ENCODE measurements at regions of chr1 and their contacts with region 1.

Region 1: GRCh38 chr1:236603991-236604904 is at the start of gene HEATR1:
- DNase-seq: peak; percentile 62 to 94 (median 82)
- ATAC-seq: peak; percentile 86
- H3K4me3 ChIP-seq: peak within 1 kb of the TSS; percentile 90 to 93
- H3K4me3 Mint-ChIP-seq: peak within 1 kb of the TSS; percentile 96
- H3K27ac ChIP-seq: peak within 1 kb of the TSS; percentile 65 to 77
- H3K27ac Mint-ChIP-seq: peak within 1 kb of the TSS; percentile 98
- H3K4me1 ChIP-seq: peaks cover 23% of the 10 kb centered on the region
- H3K4me1 Mint-ChIP-seq: peaks cover 39% of the 10 kb centered on the region
- H3K27me3 ChIP-seq: peaks cover 0 to 3% of the 10 kb centered on the region in 2 experiments
- H3K27me3 Mint-ChIP-seq: peaks cover 11% of the 10 kb centered on the region
- CTCF ChIP-seq: no peak
- total RNA-seq, gene HEATR1: 52.1 to 53.7 TPM

Region 2: GRCh38 chr1:236281654-236282424 is 322.4 kb before region 1 on chr1 and contains the start of gene ERO1B:
- CTCF ChIA-PET with region 1: no interaction called
- POLR2A ChIA-PET with region 1: interaction called, 3 read pairs
- intact Hi-C with region 1: loop called (anchors 1 to 5 kb)
- DNase-seq: peak; percentile 96 to 99 (median 97)
- ATAC-seq: peak; percentile 93
- H3K4me3 ChIP-seq: peak within 1 kb of the TSS; percentile 75 to 90
- H3K4me3 Mint-ChIP-seq: peak within 1 kb of the TSS; percentile 97
- H3K27ac ChIP-seq: peak within 1 kb of the TSS; percentile 72 to 85
- H3K27ac Mint-ChIP-seq: peak within 1 kb of the TSS; percentile 92
- H3K4me1 ChIP-seq: peaks cover 28% of the 10 kb centered on the region
- H3K4me1 Mint-ChIP-seq: peaks cover 52% of the 10 kb centered on the region
- H3K27me3 ChIP-seq: no peaks in the 10 kb centered on the region
- H3K27me3 Mint-ChIP-seq: no peaks in the 10 kb centered on the region
- CTCF ChIP-seq: no peak
- total RNA-seq, gene ERO1B: 16.2 to 16.6 TPM

Region 3: DNA sequence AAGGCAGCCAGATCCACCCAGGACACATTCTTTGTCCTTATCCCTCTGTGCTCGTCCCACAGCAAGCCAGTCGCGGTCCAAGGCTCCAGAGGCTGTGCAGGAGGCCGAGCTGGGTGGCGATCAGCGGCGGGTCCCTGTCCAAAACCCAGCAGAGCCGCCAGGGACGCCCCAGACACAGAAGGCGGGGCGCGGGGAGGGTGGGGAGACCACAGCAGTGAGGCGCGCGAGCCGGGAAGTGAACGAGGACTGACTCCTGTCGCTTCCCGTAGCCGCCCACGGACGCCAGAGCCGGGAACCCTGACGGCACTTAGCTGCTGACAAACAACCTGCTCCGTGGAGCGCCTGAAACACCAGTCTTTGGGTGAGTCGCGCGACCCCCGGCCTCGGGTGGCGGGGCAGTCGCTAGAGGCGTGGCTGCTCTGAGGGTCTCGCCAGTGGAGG is 80.5 kb before region 1 on chr1 and contains the start of gene LGALS8:
- CTCF ChIA-PET with region 1: no interaction called
- POLR2A ChIA-PET with region 1: no interaction called
- intact Hi-C with region 1: loop called (anchors 1 to 2 kb)
- DNase-seq: peak; percentile 65 to 93 (median 88)
- ATAC-seq: peak; percentile 80
- H3K4me3 ChIP-seq: peak within 1 kb of the TSS; percentile 78 to 95
- H3K4me3 Mint-ChIP-seq: peak within 1 kb of the TSS; percentile 92
- H3K27ac ChIP-seq: peak within 1 kb of the TSS; percentile 84 to 92
- H3K27ac Mint-ChIP-seq: peak within 1 kb of the TSS; percentile 93
- H3K4me1 ChIP-seq: peaks cover 11% of the 10 kb centered on the region
- H3K4me1 Mint-ChIP-seq: peaks cover 32% of the 10 kb centered on the region
- H3K27me3 ChIP-seq: no peaks in the 10 kb centered on the region
- H3K27me3 Mint-ChIP-seq: peaks cover 3% of the 10 kb centered on the region
- CTCF ChIP-seq: no peak
- total RNA-seq, gene LGALS8: 118 to 125 TPM

Region 4: GRCh38 chr1:236590553-236591150 is 13.6 kb before region 1 on chr1:
- CTCF ChIA-PET with region 1: no interaction called
- POLR2A ChIA-PET with region 1: no interaction called
- intact Hi-C with region 1: loop called in 1 of 2 experiments (anchors 1 kb)
- DNase-seq: no peak
- ATAC-seq: no peak
- H3K4me3 ChIP-seq: no peak overlapping the region
- H3K4me3 Mint-ChIP-seq: no peak overlapping the region
- H3K27ac ChIP-seq: no peak overlapping the region
- H3K27ac Mint-ChIP-seq: no peak overlapping the region
- H3K4me1 ChIP-seq: no peaks in the 10 kb centered on the region
- H3K4me1 Mint-ChIP-seq: peaks cover 4% of the 10 kb centered on the region
- H3K27me3 ChIP-seq: no peaks in the 10 kb centered on the region
- H3K27me3 Mint-ChIP-seq: no peaks in the 10 kb centered on the region
- CTCF ChIP-seq: no peak

Region 5: DNA sequence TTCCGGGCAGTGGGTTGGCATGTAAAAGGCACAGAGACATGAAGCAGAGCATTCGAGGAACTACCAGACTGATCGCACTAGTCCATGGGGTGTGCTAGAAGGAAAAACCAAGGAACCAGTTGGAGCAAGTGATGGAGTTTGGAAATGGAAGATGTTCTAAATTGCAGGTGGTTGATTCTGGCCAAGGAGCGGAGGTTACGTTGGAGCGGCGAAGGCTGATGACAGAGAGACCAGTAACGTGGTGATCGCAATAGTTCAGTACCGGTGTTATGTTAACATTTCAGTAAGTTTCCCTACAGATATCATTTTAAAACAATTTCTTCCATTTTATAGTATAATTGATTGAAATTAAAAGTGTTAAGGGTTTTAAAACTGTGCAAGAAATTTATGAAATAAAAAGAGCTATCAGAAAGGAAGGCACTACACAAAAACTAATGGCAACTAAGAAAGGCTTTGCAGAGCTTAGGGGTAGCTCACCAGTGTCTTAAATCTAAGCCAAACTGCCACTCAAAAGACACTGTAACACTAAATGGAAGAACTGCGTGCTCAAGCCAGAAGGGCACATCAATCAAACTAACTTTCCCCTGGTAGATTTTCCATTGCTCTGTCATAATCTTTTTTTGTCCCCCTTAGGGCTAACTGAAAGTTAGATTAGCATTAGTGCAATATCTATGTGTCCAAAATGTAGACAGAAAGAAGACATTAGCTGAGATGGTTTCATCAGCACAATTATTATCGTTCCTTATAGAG is 11.3 kb after region 1 on chr1:
- CTCF ChIA-PET with region 1: no interaction called
- POLR2A ChIA-PET with region 1: no interaction called
- intact Hi-C with region 1: no loop called
- DNase-seq: no peak
- ATAC-seq: no peak
- H3K4me3 ChIP-seq: no peak overlapping the region
- H3K4me3 Mint-ChIP-seq: no peak overlapping the region
- H3K27ac ChIP-seq: no peak overlapping the region
- H3K27ac Mint-ChIP-seq: no peak overlapping the region
- H3K4me1 ChIP-seq: no peaks in the 10 kb centered on the region
- H3K4me1 Mint-ChIP-seq: no peaks in the 10 kb centered on the region
- H3K27me3 ChIP-seq: peaks cover 3 to 4% of the 10 kb centered on the region in 2 experiments
- H3K27me3 Mint-ChIP-seq: peaks cover 41% of the 10 kb centered on the region
- CTCF ChIP-seq: no peak

Region 6: GRCh38 chr1:236786453-236786852 is 182.2 kb after region 1 on chr1:
- CTCF ChIA-PET with region 1: no interaction called
- POLR2A ChIA-PET with region 1: no interaction called
- intact Hi-C with region 1: no loop called
- DNase-seq: no peak
- ATAC-seq: no peak
- H3K4me3 ChIP-seq: no peak overlapping the region
- H3K4me3 Mint-ChIP-seq: no peak overlapping the region
- H3K27ac ChIP-seq: no peak overlapping the region
- H3K27ac Mint-ChIP-seq: no peak overlapping the region
- H3K4me1 ChIP-seq: no peaks in the 10 kb centered on the region
- H3K4me1 Mint-ChIP-seq: no peaks in the 10 kb centered on the region
- H3K27me3 ChIP-seq: no peaks in the 10 kb centered on the region
- H3K27me3 Mint-ChIP-seq: peaks cover 2% of the 10 kb centered on the region
- CTCF ChIP-seq: no peak

Region 7: GRCh38 chr1:236868625-236869467 is 264.6 kb after region 1 on chr1:
- CTCF ChIA-PET with region 1: no interaction called
- POLR2A ChIA-PET with region 1: no interaction called
- intact Hi-C with region 1: loop called (anchors 10 kb)
- DNase-seq: peak in 8 of 9 experiments; percentile 10 to 76 (median 46)
- ATAC-seq: peak; percentile 78
- H3K4me3 ChIP-seq: no peak overlapping the region
- H3K4me3 Mint-ChIP-seq: no peak overlapping the region
- H3K27ac ChIP-seq: no peak overlapping the region
- H3K27ac Mint-ChIP-seq: no peak overlapping the region
- H3K4me1 ChIP-seq: no peaks in the 10 kb centered on the region
- H3K4me1 Mint-ChIP-seq: no peaks in the 10 kb centered on the region
- H3K27me3 ChIP-seq: no peaks in the 10 kb centered on the region
- H3K27me3 Mint-ChIP-seq: no peaks in the 10 kb centered on the region
- CTCF ChIP-seq: peak; percentile 94

Region 8: GRCh38 chr1:237527761-237528160 is 923.5 kb after region 1 on chr1:
- CTCF ChIA-PET with region 1: no interaction called
- POLR2A ChIA-PET with region 1: no interaction called
- intact Hi-C with region 1: no loop called
- DNase-seq: no peak
- ATAC-seq: no peak
- H3K4me3 ChIP-seq: no peak overlapping the region
- H3K4me3 Mint-ChIP-seq: no peak overlapping the region
- H3K27ac ChIP-seq: no peak overlapping the region
- H3K27ac Mint-ChIP-seq: no peak overlapping the region
- H3K4me1 ChIP-seq: no peaks in the 10 kb centered on the region
- H3K4me1 Mint-ChIP-seq: no peaks in the 10 kb centered on the region
- H3K27me3 ChIP-seq: no peaks in the 10 kb centered on the region
- H3K27me3 Mint-ChIP-seq: peaks cover 4% of the 10 kb centered on the region
- CTCF ChIP-seq: no peak